CD8-positive, alpha-beta T cell (primary cell): ENCODE measurements at regions of chr19 and their contacts with region 1.

Region 1: GRCh38 chr19:23925285-23925684 is 10.6 kb downstream of the ZNF726 start:
- DNase-seq: no peak
- ATAC-seq: no peak
- H3K4me3 ChIP-seq: no peak overlapping the region
- H3K4me3 Mint-ChIP-seq: no peak overlapping the region
- H3K27ac ChIP-seq: no peak overlapping the region
- H3K27ac Mint-ChIP-seq: no peak overlapping the region
- H3K4me1 ChIP-seq: no peaks in the 10 kb centered on the region
- H3K4me1 Mint-ChIP-seq: peaks cover 1% of the 10 kb centered on the region
- H3K27me3 ChIP-seq: no peaks in the 10 kb centered on the region
- H3K27me3 Mint-ChIP-seq: no peaks in the 10 kb centered on the region
- CTCF ChIP-seq: no peak

Region 2: GRCh38 chr19:23832717-23833327 is 92.5 kb before region 1 on chr19:
- CTCF ChIA-PET with region 1: no interaction called
- POLR2A ChIA-PET with region 1: no interaction called
- intact Hi-C with region 1: no loop called
- DNase-seq: no peak
- ATAC-seq: no peak
- H3K4me3 ChIP-seq: no peak overlapping the region
- H3K4me3 Mint-ChIP-seq: no peak overlapping the region
- H3K27ac ChIP-seq: no peak overlapping the region
- H3K27ac Mint-ChIP-seq: no peak overlapping the region
- H3K4me1 ChIP-seq: no peaks in the 10 kb centered on the region
- H3K4me1 Mint-ChIP-seq: no peaks in the 10 kb centered on the region
- H3K27me3 ChIP-seq: no peaks in the 10 kb centered on the region
- H3K27me3 Mint-ChIP-seq: no peaks in the 10 kb centered on the region
- CTCF ChIP-seq: no peak

Region 3: GRCh38 chr19:23901360-23901759 is 23.9 kb before region 1 on chr19:
- CTCF ChIA-PET with region 1: interaction called, 3 read pairs
- POLR2A ChIA-PET with region 1: no interaction called
- intact Hi-C with region 1: loop called in 1 of 2 experiments (anchors 2 kb)
- DNase-seq: no peak
- ATAC-seq: no peak
- H3K4me3 ChIP-seq: no peak overlapping the region
- H3K4me3 Mint-ChIP-seq: no peak overlapping the region
- H3K27ac ChIP-seq: no peak overlapping the region
- H3K27ac Mint-ChIP-seq: no peak overlapping the region
- H3K4me1 ChIP-seq: no peaks in the 10 kb centered on the region
- H3K4me1 Mint-ChIP-seq: no peaks in the 10 kb centered on the region
- H3K27me3 ChIP-seq: no peaks in the 10 kb centered on the region
- H3K27me3 Mint-ChIP-seq: no peaks in the 10 kb centered on the region
- CTCF ChIP-seq: no peak

Region 4: DNA sequence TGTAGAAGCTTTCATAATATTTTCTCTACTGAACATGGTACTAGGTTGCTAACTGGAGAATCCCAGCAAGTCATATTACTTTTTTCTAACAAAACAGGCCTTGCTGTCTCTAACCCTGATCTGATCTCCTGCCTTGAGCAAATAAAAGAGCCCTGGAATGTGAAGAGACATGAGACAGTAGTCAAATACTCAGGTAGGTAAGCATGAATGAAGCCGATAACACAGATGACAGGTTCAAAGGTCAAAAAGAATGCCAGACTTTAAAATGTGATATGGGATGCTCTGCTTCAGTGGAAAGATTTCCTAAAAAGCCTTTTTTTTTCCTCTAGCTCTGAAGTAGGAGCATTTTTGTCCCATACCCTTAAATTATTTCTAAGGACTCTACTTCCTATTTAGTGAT is 18.1 kb after region 1 on chr19:
- CTCF ChIA-PET with region 1: no interaction called
- POLR2A ChIA-PET with region 1: no interaction called
- intact Hi-C with region 1: no loop called
- DNase-seq: no peak
- ATAC-seq: no peak
- H3K4me3 ChIP-seq: no peak overlapping the region
- H3K4me3 Mint-ChIP-seq: no peak overlapping the region
- H3K27ac ChIP-seq: no peak overlapping the region
- H3K27ac Mint-ChIP-seq: no peak overlapping the region
- H3K4me1 ChIP-seq: no peaks in the 10 kb centered on the region
- H3K4me1 Mint-ChIP-seq: peaks cover 8% of the 10 kb centered on the region
- H3K27me3 ChIP-seq: no peaks in the 10 kb centered on the region
- H3K27me3 Mint-ChIP-seq: no peaks in the 10 kb centered on the region
- CTCF ChIP-seq: no peak